AG04449 (cell line): ENCODE measurements at regions of chr1 and their contacts with region 1.

Region 1: GRCh38 chr1:156445789-156446263 is 54.7 kb downstream of the MEF2D start:
- DNase-seq: no peak
- H3K4me3 ChIP-seq: no peak overlapping the region
- CTCF ChIP-seq: peak; percentile 98

Region 2: DNA sequence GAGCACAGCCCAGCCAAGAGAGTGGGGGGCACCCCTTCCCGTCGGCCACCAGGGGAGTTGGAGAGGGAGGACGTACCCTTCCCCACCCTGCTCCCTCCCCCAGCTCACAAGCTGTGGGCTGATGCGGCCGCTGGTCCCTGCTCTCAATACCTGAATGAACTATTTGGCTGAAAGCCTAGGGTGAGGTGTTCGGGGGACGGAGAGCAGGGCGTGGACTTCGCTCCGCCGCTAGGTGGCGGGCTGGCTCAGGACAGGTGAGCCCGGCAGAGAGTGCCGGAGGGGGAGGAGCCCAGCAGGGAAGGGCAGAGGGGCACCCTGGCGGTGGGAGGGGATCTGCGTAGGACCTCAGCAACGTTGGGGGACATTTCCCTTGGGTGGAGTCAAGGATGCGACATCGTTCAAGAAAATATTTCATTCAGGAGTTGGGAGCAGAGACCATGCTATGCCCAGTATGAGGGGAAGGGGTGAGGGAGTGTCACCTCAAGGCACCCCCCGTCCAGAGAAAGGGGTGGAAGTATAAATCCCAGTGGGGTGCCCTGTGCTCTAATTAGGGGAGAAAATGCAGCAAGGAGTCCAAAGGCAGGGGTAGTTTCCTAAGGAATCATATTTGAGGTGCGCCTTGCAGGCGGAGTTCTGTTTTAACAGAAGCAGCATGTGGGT is 88.8 kb before region 1 on chr1:
- CTCF ChIA-PET with region 1: interaction called, 10 read pairs
- POLR2A ChIA-PET with region 1: no interaction called
- DNase-seq: no peak
- H3K4me3 ChIP-seq: no peak overlapping the region
- CTCF ChIP-seq: no peak

Region 3: GRCh38 chr1:156401681-156402081 is 44.1 kb before region 1 on chr1:
- CTCF ChIA-PET with region 1: interaction called, 23 read pairs
- POLR2A ChIA-PET with region 1: no interaction called
- DNase-seq: no peak
- H3K4me3 ChIP-seq: no peak overlapping the region
- CTCF ChIP-seq: no peak

Region 4: GRCh38 chr1:156421062-156421938 is 24.5 kb before region 1 on chr1:
- CTCF ChIA-PET with region 1: interaction called, 44 read pairs
- POLR2A ChIA-PET with region 1: no interaction called
- DNase-seq: no peak
- H3K4me3 ChIP-seq: peak overlapping the region; percentile 15; the same call in 1 of the 2 replicates
- CTCF ChIP-seq: no peak

Region 5: GRCh38 chr1:156435545-156436141 is 10.2 kb before region 1 on chr1:
- CTCF ChIA-PET with region 1: interaction called, 65 read pairs
- POLR2A ChIA-PET with region 1: no interaction called
- DNase-seq: no peak
- H3K4me3 ChIP-seq: no peak overlapping the region
- CTCF ChIP-seq: no peak

Region 6: GRCh38 chr1:156500797-156501499 is 55.1 kb after region 1 on chr1:
- CTCF ChIA-PET with region 1: interaction called, 10 read pairs
- POLR2A ChIA-PET with region 1: no interaction called
- DNase-seq: peak; percentile 63
- H3K4me3 ChIP-seq: peak overlapping the region; percentile 96
- CTCF ChIP-seq: peak; percentile 52